OCI-LY7 (cell line): ENCODE measurements at regions of chr5 and their contacts with region 1.

Region 1: DNA sequence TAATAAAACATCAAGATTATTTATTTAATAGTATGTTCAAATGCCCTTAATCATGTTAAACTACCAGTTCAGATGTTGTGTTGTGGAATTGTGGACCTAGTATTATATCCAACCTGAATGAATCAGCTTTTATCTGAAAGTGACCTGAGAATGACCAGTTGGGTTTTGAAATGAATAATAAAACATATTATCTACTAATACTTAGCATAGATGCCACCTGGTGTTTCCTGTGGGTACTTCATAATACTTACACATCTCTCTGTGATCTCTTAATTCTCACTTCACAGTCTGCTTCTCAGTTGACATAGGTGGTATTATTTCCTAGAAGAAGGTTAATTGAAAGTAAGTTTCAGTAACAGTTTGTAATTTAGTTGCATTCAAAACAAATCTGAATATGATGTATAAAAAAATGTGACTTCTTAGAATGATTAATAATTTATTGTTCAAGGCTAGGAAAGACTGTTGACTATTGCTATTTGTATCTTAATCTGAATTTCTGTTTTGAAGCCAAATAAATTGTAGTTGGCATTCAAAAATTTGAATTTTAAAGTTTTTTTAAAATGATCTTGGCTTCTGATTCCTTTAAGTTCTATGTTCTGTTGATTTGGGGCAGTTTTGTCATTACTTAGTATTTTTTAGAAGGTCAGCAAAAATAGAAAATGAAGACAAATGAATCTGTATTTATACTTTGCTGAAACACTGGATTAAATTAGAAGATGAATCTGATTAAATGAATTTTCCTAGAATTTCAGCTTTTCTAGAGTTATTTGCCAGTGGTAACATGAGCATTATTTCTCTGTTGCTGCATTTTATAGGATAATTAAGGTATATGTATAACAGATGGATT is 48.2 kb downstream of the KIF2A start:
- DNase-seq: peak; percentile 67
- H3K4me3 ChIP-seq: no peak overlapping the region
- H3K27ac ChIP-seq: no peak overlapping the region
- H3K4me1 ChIP-seq: no peaks in the 10 kb centered on the region
- CTCF ChIP-seq: peak; percentile 86

Region 2: GRCh38 chr5:62190173-62190572 is 164.1 kb before region 1 on chr5:
- CTCF ChIA-PET with region 1: no interaction called
- POLR2A ChIA-PET with region 1: no interaction called
- intact Hi-C with region 1: no loop called
- DNase-seq: no peak
- H3K4me3 ChIP-seq: no peak overlapping the region
- H3K27ac ChIP-seq: no peak overlapping the region
- H3K4me1 ChIP-seq: no peaks in the 10 kb centered on the region
- CTCF ChIP-seq: no peak

Region 3: GRCh38 chr5:62268234-62268633 is 86.0 kb before region 1 on chr5:
- CTCF ChIA-PET with region 1: no interaction called
- POLR2A ChIA-PET with region 1: no interaction called
- intact Hi-C with region 1: no loop called
- DNase-seq: no peak
- H3K4me3 ChIP-seq: no peak overlapping the region
- H3K27ac ChIP-seq: no peak overlapping the region
- H3K4me1 ChIP-seq: no peaks in the 10 kb centered on the region
- CTCF ChIP-seq: no peak

Region 4: GRCh38 chr5:62305715-62306322 is 48.4 kb before region 1 on chr5 and contains the start of gene KIF2A:
- CTCF ChIA-PET with region 1: interaction called, 3 read pairs
- POLR2A ChIA-PET with region 1: interaction called, 4 read pairs
- intact Hi-C with region 1: loop called (anchors 5 kb)
- DNase-seq: peak; percentile 97
- H3K4me3 ChIP-seq: peak within 1 kb of the TSS; percentile 97
- H3K27ac ChIP-seq: peak within 1 kb of the TSS; percentile 88
- H3K4me1 ChIP-seq: peaks cover 35% of the 10 kb centered on the region
- CTCF ChIP-seq: no peak
- total RNA-seq, gene KIF2A: 50.3 and 56.9 TPM in 2 replicates

Region 5: GRCh38 chr5:62340392-62340791 is 13.9 kb before region 1 on chr5:
- CTCF ChIA-PET with region 1: no interaction called
- POLR2A ChIA-PET with region 1: interaction called, 10 read pairs
- intact Hi-C with region 1: no loop called
- DNase-seq: peak; percentile 14
- H3K4me3 ChIP-seq: no peak overlapping the region
- H3K27ac ChIP-seq: no peak overlapping the region
- H3K4me1 ChIP-seq: no peaks in the 10 kb centered on the region
- CTCF ChIP-seq: peak; percentile 70